Mammary epithelial cell (primary cell): ENCODE measurements at regions of chr6 and their contacts with region 1.

Region 1: DNA sequence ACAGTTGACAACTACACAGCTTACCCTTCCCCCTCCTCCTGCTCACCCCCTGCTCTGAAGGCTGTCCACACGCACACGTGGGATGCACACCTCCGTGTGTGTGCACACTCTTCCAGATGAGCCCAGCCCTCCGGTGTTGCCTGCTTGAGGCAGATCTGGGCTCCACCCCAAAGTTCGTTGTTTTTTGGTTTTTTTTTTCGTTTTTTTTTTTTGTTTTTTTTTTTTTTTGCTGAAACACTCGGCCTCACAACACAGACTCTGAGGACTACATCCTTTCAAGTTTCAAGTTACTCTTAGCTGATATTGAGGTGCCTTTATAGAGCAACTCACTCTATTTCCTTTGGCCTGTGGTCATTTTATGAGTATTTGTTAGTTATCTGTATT is 88.2 kb downstream of the RREB1 start:
- DNase-seq: no peak
- H3K4me3 ChIP-seq: no peak overlapping the region
- H3K27ac ChIP-seq: no peak overlapping the region
- H3K4me1 ChIP-seq: peaks cover 5% of the 10 kb centered on the region
- H3K27me3 ChIP-seq: no peaks in the 10 kb centered on the region
- CTCF ChIP-seq: no peak

Region 2: DNA sequence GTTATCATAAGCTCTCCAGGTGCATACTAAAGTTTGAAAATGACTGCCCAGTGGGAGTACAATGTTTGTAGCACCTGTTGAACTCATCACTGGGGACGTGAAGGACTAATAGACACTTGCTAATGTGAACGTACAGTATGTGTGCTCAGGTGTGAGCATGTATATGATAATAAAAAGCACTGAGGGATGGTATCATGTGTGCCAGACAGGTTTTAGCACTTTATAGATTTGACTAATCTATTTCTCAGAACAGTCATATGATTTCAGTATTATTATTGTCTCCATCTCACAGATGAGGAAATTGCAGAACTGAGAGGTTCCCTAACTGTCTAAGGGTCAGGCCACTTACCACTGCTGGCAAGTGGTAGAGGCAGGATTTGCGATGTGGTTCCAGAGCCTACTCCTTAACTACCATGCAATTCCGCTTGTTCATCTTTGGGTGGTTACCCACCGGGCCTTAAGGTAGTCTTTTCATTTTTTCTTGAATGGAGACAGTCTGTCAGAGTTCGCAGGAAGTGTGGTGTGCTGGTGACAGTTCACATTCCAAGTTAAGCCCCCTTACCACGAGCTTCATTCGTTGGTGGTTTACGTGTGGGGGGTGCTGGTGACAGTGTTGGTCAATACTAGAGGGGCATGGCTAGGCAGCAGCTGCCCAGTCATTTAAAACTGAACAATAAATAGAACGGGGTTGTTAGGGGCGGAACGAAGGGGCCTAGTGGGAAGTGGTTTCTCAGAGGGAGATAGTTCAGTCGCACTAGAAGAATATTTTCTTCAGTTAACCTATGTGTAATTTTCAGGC is 41.5 kb before region 1 on chr6:
- CTCF ChIA-PET with region 1: no interaction called
- dilution Hi-C with region 1: loop called (anchors 5 kb)
- in situ Hi-C with region 1: no loop called
- intact Hi-C with region 1: no loop called
- DNase-seq: no peak
- H3K4me3 ChIP-seq: no peak overlapping the region
- H3K27ac ChIP-seq: no peak overlapping the region
- H3K4me1 ChIP-seq: peaks cover 36% of the 10 kb centered on the region
- H3K27me3 ChIP-seq: no peaks in the 10 kb centered on the region
- CTCF ChIP-seq: no peak

Region 3: GRCh38 chr6:7324520-7324919 is 128.5 kb after region 1 on chr6:
- CTCF ChIA-PET with region 1: no interaction called
- dilution Hi-C with region 1: no loop called
- in situ Hi-C with region 1: no loop called
- intact Hi-C with region 1: no loop called
- DNase-seq: no peak
- H3K4me3 ChIP-seq: no peak overlapping the region
- H3K27ac ChIP-seq: no peak overlapping the region
- H3K4me1 ChIP-seq: peaks cover 9% of the 10 kb centered on the region
- H3K27me3 ChIP-seq: no peaks in the 10 kb centered on the region
- CTCF ChIP-seq: no peak